ENCODE measurements at regions of chr3 and their contacts with region 1.

Region 1: DNA sequence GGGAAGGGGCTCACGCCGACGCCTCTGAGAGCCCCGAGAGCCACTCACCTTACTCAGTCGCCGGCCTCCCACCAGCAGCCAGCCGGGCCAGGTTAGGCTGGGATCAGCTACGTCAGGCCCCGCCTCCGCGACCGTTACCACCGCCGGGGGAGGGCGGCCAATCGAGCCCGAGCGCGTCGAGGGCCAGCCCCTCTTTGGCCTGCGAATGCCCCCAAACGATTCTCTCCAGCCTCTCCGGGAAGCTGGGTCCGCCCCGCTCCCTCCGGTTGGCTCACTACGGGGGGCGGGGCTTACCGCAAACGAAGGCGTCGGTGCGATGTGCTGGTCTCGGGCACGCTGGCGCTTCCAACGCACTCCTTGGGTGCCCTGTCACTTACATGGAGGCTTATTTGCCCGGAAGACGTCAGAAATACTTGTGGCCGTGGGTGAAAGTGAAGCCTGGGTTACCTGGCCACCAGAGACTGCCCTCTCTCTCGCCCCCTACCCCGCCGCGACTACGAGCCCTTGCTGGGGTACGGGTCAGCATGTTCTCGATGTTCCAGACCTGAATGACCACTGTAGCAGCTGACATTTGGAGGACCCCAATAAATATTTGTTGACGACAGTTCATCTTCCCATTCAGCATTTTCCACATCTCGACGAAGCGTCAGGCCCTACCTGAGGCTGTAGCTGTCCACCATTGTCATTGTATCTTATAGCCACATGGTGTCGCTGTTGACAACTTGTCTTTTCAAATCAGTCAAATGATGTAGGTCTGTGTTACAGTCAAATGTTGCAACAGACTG is at the start of gene CEP70:
- DNase-seq: peak; percentile 93
- ATAC-seq: peak; percentile 91
- H3K4me3 ChIP-seq: peak within 1 kb of the TSS; percentile 91
- H3K27ac ChIP-seq: peak within 1 kb of the TSS; percentile 62
- H3K4me1 ChIP-seq: 0 out of 2 replicates have a peak, but pooled peaks cover 9% of the 10 kb centered on the region
- H3K27me3 ChIP-seq: no peaks in the 10 kb centered on the region
- CTCF ChIP-seq: peak; percentile 84
- total RNA-seq, gene CEP70: 11.3 and 16.7 TPM in 2 replicates

Region 2: GRCh38 chr3:138234401-138235179 is 359.8 kb before region 1 on chr3:
- CTCF ChIA-PET with region 1: no interaction called
- POLR2A ChIA-PET with region 1: no interaction called
- intact Hi-C with region 1: no loop called
- DNase-seq: peak; percentile 76
- ATAC-seq: peak; percentile 96
- H3K4me3 ChIP-seq: no peak overlapping the region
- H3K27ac ChIP-seq: peak overlapping the region; percentile 45
- H3K4me1 ChIP-seq: peaks cover 24% of the 10 kb centered on the region
- H3K27me3 ChIP-seq: no peaks in the 10 kb centered on the region
- CTCF ChIP-seq: no peak

Region 3: GRCh38 chr3:138329127-138329983 is 265.0 kb before region 1 on chr3 and contains the start of gene NME9:
- CTCF ChIA-PET with region 1: no interaction called
- POLR2A ChIA-PET with region 1: no interaction called
- intact Hi-C with region 1: loop called (anchors 5 kb)
- DNase-seq: peak; percentile 75
- ATAC-seq: peak; percentile 84
- H3K4me3 ChIP-seq: peak within 1 kb of the TSS; percentile 83
- H3K27ac ChIP-seq: no peak within 1 kb of the TSS
- H3K4me1 ChIP-seq: peaks cover 7% of the 10 kb centered on the region; the same call in 1 of the 2 replicates
- H3K27me3 ChIP-seq: no peaks in the 10 kb centered on the region
- CTCF ChIP-seq: peak; percentile 62
- total RNA-seq, gene NME9: 0.40 TPM in 1 of 2 replicates, not detected in the other

Region 4: DNA sequence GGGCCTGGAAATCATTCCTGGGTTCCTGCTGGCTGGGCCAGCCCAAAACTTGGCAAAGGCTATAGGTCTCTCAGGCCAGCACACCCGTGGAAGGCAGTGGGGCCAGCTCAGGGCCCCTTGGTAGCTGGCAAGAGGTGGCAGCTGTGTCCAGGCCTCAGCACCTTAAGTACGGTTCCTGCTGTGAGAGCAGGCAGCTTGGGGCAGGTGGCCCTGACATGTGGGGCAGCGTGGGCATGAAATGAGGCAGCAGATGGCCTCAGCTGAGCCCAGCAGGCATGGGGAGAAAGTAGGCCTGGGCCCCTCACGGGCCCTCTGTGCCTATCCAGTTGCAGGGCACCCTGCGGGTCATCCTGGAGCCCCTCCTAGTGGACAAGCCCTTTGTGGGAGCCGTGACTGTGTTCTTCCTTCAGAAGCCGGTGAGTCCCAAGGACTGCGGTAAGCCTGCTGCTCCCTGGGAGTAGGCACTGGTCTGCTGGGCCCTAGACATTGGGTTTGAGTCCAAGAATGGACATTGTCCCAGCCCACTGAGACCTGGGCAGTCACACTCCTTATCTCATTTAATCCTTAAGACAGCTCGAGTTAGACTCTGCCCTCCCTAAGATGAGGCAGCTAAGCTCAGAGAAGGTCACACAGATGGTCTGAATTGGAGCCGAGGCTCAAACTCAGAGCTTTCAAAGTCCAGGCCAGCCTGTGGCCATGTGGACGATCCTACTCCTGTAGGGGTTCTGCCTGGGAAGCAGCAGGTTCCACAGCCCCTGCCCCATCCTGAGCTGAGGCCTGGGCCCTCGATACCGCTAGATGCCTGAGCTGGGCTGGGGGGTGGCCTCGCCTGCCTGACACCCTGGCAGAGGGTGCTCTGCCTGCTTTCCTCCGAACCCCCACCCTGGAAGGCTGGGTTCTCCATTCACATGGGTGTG is 134.5 kb before region 1 on chr3:
- CTCF ChIA-PET with region 1: no interaction called
- POLR2A ChIA-PET with region 1: no interaction called
- intact Hi-C with region 1: loop called (anchors 5 kb)
- DNase-seq: no peak
- ATAC-seq: no peak
- H3K4me3 ChIP-seq: no peak overlapping the region
- H3K27ac ChIP-seq: no peak overlapping the region
- H3K4me1 ChIP-seq: no peaks in the 10 kb centered on the region
- H3K27me3 ChIP-seq: no peaks in the 10 kb centered on the region
- CTCF ChIP-seq: no peak

Region 5: GRCh38 chr3:138694287-138695007 is 100.1 kb after region 1 on chr3:
- CTCF ChIA-PET with region 1: interaction called, 3 read pairs
- POLR2A ChIA-PET with region 1: no interaction called
- intact Hi-C with region 1: loop called (anchors 1 kb)
- DNase-seq: peak; percentile 76
- ATAC-seq: peak; percentile 92
- H3K4me3 ChIP-seq: no peak overlapping the region
- H3K27ac ChIP-seq: peak overlapping the region; percentile 62
- H3K4me1 ChIP-seq: peaks cover 15% of the 10 kb centered on the region
- H3K27me3 ChIP-seq: no peaks in the 10 kb centered on the region
- CTCF ChIP-seq: no peak

Region 6: GRCh38 chr3:138923531-138923994 is 329.2 kb after region 1 on chr3:
- CTCF ChIA-PET with region 1: interaction called, 18 read pairs
- POLR2A ChIA-PET with region 1: no interaction called
- intact Hi-C with region 1: loop called (anchors 1 kb)
- DNase-seq: peak; percentile 88
- ATAC-seq: peak; percentile 47
- H3K4me3 ChIP-seq: 0 out of 2 replicates have a peak overlapping the region, but pooled peaks have one; percentile 30
- H3K27ac ChIP-seq: no peak overlapping the region
- H3K4me1 ChIP-seq: peaks cover 17% of the 10 kb centered on the region
- H3K27me3 ChIP-seq: no peaks in the 10 kb centered on the region
- CTCF ChIP-seq: peak; percentile 82

Measured in PC-3 (cell line).